ENCODE measurements at regions of chr14 and their contacts with region 1.

Region 1: GRCh38 chr14:105351920-105352851 is 37.6 kb downstream of the PACS2 start:
- DNase-seq: peak in 4 of 5 donors; percentile 91 to 94 (median 92)
- H3K4me3 ChIP-seq: peak overlapping the region in 1 of 3 donors; percentile 4
- H3K27ac ChIP-seq: no peak overlapping the region
- H3K4me1 ChIP-seq: peaks cover 0 to 4% (median 4%) of the 10 kb centered on the region in 3 donors
- H3K27me3 ChIP-seq: no peaks in the 10 kb centered on the region
- CTCF ChIP-seq: peak; percentile 79

Region 2: DNA sequence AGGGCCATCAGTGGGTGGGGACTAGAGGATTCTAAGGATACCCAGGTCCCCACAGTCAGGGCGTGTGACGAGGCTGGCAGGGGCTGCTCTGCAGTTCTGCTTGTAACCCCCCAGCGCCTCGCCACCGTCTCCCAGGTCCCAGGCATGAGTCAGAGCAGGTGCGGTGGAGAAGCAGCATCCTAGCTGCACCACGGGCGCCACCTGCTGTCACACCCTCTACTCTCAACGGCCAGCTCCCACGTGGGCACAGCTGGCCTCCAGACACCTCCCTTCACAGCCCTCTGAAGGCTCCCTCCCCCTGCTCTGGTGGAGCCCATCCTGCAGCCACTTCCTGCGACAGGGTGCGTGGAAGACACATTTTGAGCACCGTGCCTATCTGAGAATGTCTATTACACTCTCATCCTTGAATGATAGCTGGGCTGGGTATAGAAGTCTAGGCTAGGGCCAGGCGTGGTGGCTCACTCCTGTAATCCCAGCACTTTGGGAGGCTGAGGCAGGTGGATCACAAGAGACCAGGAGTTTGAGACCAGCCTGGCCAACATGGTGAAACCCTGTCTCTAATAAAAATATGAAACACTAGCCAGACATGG is 164.2 kb before region 1 on chr14:
- intact Hi-C with region 1: no loop called
- DNase-seq: no peak
- H3K4me3 ChIP-seq: no peak overlapping the region
- H3K27ac ChIP-seq: no peak overlapping the region
- H3K4me1 ChIP-seq: no peaks in the 10 kb centered on the region
- H3K27me3 ChIP-seq: no peaks in the 10 kb centered on the region
- CTCF ChIP-seq: no peak

Region 3: GRCh38 chr14:105203057-105203531 is 149.1 kb before region 1 on chr14:
- intact Hi-C with region 1: loop called (anchors 5 kb)
- DNase-seq: peak; percentile 82 to 91 (median 84)
- H3K4me3 ChIP-seq: no peak overlapping the region
- H3K27ac ChIP-seq: no peak overlapping the region
- H3K4me1 ChIP-seq: peaks cover 0 to 39% (median 6%) of the 10 kb centered on the region in 3 donors
- H3K27me3 ChIP-seq: no peaks in the 10 kb centered on the region
- CTCF ChIP-seq: peak; percentile 96

Region 4: DNA sequence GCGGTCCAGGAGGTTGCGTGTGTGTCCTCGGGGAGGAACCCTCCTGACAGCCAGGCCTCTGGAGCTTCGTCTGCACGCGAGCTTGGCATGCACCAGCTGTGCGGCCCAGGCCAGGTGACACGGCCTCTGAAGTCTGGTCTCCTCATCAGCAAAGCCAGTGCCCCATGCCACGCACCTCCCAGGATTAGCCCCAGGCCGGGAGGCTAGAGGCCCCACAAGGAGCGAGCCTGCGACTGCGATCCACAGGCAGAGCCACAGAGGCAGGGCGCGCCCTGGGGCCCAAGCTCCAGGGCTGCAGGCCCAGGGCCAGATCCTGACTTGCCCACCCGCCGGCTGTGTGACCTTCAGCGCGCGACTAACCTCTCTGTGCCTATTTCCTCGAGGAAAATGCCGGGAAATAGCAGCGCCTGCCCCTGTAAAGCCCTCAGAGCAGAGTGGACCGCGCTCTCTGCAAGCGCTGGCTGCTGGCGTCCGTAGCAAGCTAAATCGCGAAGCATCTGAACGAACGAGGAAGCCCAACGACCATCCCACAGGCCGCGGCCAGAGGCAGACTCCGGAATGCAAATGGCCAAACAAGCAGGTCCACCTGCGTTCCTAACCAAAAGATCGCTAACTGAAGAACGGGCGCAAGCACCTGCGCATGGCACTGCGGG is 104.3 kb before region 1 on chr14:
- intact Hi-C with region 1: no loop called
- DNase-seq: peak in 1 of 5 donors; percentile 74
- H3K4me3 ChIP-seq: peak overlapping the region; percentile 70 to 79 (median 79)
- H3K27ac ChIP-seq: peak overlapping the region; percentile 33 to 81
- H3K4me1 ChIP-seq: peaks cover 0 to 10% (median 0%) of the 10 kb centered on the region in 3 donors
- H3K27me3 ChIP-seq: no peaks in the 10 kb centered on the region
- CTCF ChIP-seq: no peak

Region 5: GRCh38 chr14:105480952-105481801 is 129.0 kb after region 1 on chr14:
- intact Hi-C with region 1: no loop called
- DNase-seq: peak; percentile 95 to 96 (median 95)
- H3K4me3 ChIP-seq: peak overlapping the region; percentile 43 to 59 (median 44)
- H3K27ac ChIP-seq: peak overlapping the region; percentile 96 to 99
- H3K4me1 ChIP-seq: peaks cover 0 to 51% (median 27%) of the 10 kb centered on the region in 3 donors
- H3K27me3 ChIP-seq: no peaks in the 10 kb centered on the region
- CTCF ChIP-seq: peak; percentile 99

Measured in kidney (tissue), 22 donors.